Natural killer cell (primary cell): ENCODE measurements at regions of chr22 and their contacts with region 1.

Region 1: DNA sequence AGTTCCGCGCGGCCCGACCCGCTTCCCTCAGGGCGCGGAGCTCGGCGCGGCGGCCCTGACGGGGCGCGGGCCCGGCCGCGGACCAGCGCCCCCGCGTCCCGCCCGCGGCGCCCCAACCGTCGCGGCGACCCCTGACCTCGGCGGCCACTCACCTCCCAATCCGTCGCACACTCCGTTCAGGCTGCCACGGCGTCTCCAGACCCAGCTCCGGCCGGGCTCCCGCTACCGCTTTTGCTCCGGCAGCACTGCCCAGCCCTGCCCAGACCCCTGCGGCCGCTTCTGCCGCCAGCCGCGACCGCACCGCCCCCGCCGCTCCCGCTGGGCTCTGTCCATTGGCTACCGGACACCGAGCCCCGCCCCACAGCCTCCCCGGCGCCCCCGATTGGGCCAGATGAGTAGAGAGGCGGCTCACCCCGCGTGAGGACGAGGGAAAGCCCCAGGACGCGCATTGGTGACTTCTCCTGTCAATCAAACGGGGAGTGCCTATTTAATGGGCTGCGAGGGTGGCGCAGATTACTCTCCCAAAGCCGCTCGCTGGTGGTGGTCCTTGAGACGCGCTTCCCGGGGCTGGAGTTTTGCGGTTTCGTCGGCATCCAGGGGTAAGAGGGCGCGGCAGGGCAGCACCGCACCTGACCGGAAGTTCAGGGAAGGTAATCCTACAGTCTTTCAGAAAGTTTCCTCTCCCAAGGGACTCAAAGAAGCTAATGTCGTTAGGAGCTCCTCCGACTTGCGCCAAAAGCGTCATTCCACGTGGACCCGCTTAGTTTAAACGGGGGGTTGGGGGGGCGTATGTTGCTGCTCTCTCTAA is at the start of gene PACSIN2:
- DNase-seq: peak; percentile 98 to 99
- ATAC-seq: peak; percentile 96 to 100 (median 98)
- H3K4me3 ChIP-seq: peak within 1 kb of the TSS; percentile 84
- H3K4me3 Mint-ChIP-seq: peak within 1 kb of the TSS; percentile 96
- H3K27ac ChIP-seq: peak within 1 kb of the TSS; percentile 78
- H3K27ac Mint-ChIP-seq: peak within 1 kb of the TSS; percentile 82 to 95
- H3K4me1 ChIP-seq: peaks cover 19% of the 10 kb centered on the region
- H3K4me1 Mint-ChIP-seq: peaks cover 24 to 28% of the 10 kb centered on the region in 2 donors
- H3K27me3 ChIP-seq: no peaks in the 10 kb centered on the region
- H3K27me3 Mint-ChIP-seq: peaks cover 0 to 3% of the 10 kb centered on the region in 2 donors
- CTCF ChIP-seq: no peak
- total RNA-seq, gene PACSIN2: 37.1 to 48.5 (median 47.6) TPM

Region 2: GRCh38 chr22:42614312-42615091 is 400.6 kb before region 1 on chr22 and contains the start of gene POLDIP3:
- intact Hi-C with region 1: loop called (anchors 1 kb)
- DNase-seq: peak; percentile 99 to 100
- ATAC-seq: peak; percentile 70 to 90 (median 74)
- H3K4me3 ChIP-seq: peak within 1 kb of the TSS; percentile 70
- H3K4me3 Mint-ChIP-seq: peak within 1 kb of the TSS; percentile 97
- H3K27ac ChIP-seq: peak within 1 kb of the TSS; percentile 84
- H3K27ac Mint-ChIP-seq: peak within 1 kb of the TSS; percentile 100
- H3K4me1 ChIP-seq: peaks cover 44% of the 10 kb centered on the region
- H3K4me1 Mint-ChIP-seq: peaks cover 34 to 52% of the 10 kb centered on the region in 2 donors
- H3K27me3 ChIP-seq: no peaks in the 10 kb centered on the region
- H3K27me3 Mint-ChIP-seq: no peaks in the 10 kb centered on the region
- CTCF ChIP-seq: no peak
- total RNA-seq, gene POLDIP3: 66.1 to 82.8 (median 70.8) TPM

Region 3: DNA sequence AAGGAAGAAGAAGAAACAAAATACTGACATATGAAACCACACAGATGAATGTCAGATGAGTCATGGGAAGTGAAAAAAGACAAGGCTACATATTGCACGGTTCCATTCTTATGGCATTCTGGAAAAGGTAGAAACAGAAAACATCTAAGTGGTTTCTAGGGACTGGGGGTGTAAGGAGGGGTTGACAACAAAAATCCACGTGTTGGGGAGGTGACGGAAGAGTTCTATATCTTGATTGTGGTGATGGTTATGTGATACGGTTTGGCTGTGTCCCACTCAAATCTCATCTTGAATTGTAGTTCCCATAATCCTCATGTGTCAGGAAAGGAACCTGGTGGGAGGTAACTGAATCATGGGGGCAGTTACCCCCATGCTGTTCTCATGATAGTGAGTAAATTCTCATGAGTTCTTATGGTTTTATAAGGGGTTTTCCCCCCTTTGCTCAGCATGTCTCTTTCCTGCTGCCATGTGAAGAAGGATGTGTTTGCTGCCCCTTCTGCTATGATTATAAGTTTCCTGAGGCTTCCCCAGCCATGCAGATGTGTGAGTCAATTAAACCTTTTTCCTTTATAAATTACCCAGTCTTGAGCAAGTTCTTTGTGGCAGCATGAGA is 151.6 kb before region 1 on chr22:
- intact Hi-C with region 1: loop called (anchors 10 kb)
- DNase-seq: no peak
- ATAC-seq: peak in 2 of 3 donors; percentile 18 to 38
- H3K4me3 ChIP-seq: no peak overlapping the region
- H3K4me3 Mint-ChIP-seq: no peak overlapping the region
- H3K27ac ChIP-seq: no peak overlapping the region
- H3K27ac Mint-ChIP-seq: peak overlapping the region in 1 of 2 donors; percentile 74
- H3K4me1 ChIP-seq: peaks cover 4% of the 10 kb centered on the region
- H3K4me1 Mint-ChIP-seq: peaks cover 8 to 20% of the 10 kb centered on the region in 2 donors
- H3K27me3 ChIP-seq: no peaks in the 10 kb centered on the region
- H3K27me3 Mint-ChIP-seq: no peaks in the 10 kb centered on the region
- CTCF ChIP-seq: no peak

Region 4: GRCh38 chr22:42880815-42881214 is 134.3 kb before region 1 on chr22:
- intact Hi-C with region 1: no loop called
- DNase-seq: no peak
- ATAC-seq: no peak
- H3K4me3 ChIP-seq: no peak overlapping the region
- H3K4me3 Mint-ChIP-seq: no peak overlapping the region
- H3K27ac ChIP-seq: no peak overlapping the region
- H3K27ac Mint-ChIP-seq: no peak overlapping the region
- H3K4me1 ChIP-seq: no peaks in the 10 kb centered on the region
- H3K4me1 Mint-ChIP-seq: no peaks in the 10 kb centered on the region
- H3K27me3 ChIP-seq: no peaks in the 10 kb centered on the region
- H3K27me3 Mint-ChIP-seq: no peaks in the 10 kb centered on the region
- CTCF ChIP-seq: no peak

Region 5: GRCh38 chr22:42895087-42895486 is 120.0 kb before region 1 on chr22:
- intact Hi-C with region 1: loop called (anchors 10 kb)
- DNase-seq: peak; percentile 26 to 71
- ATAC-seq: peak; percentile 76 to 82 (median 80)
- H3K4me3 ChIP-seq: no peak overlapping the region
- H3K4me3 Mint-ChIP-seq: peak overlapping the region; percentile 77
- H3K27ac ChIP-seq: peak overlapping the region; percentile 86
- H3K27ac Mint-ChIP-seq: peak overlapping the region; percentile 91 to 92
- H3K4me1 ChIP-seq: peaks cover 73% of the 10 kb centered on the region
- H3K4me1 Mint-ChIP-seq: peaks cover 46 to 65% of the 10 kb centered on the region in 2 donors
- H3K27me3 ChIP-seq: no peaks in the 10 kb centered on the region
- H3K27me3 Mint-ChIP-seq: no peaks in the 10 kb centered on the region
- CTCF ChIP-seq: no peak

Region 6: GRCh38 chr22:42969421-42969871 is 45.6 kb before region 1 on chr22:
- intact Hi-C with region 1: no loop called
- DNase-seq: no peak
- ATAC-seq: no peak
- H3K4me3 ChIP-seq: no peak overlapping the region
- H3K4me3 Mint-ChIP-seq: no peak overlapping the region
- H3K27ac ChIP-seq: no peak overlapping the region
- H3K27ac Mint-ChIP-seq: no peak overlapping the region
- H3K4me1 ChIP-seq: peaks cover 18% of the 10 kb centered on the region
- H3K4me1 Mint-ChIP-seq: peaks cover 30 to 50% of the 10 kb centered on the region in 2 donors
- H3K27me3 ChIP-seq: no peaks in the 10 kb centered on the region
- H3K27me3 Mint-ChIP-seq: no peaks in the 10 kb centered on the region
- CTCF ChIP-seq: no peak